ENCODE measurements at regions of chr1 and their contacts with region 1.

Region 1: DNA sequence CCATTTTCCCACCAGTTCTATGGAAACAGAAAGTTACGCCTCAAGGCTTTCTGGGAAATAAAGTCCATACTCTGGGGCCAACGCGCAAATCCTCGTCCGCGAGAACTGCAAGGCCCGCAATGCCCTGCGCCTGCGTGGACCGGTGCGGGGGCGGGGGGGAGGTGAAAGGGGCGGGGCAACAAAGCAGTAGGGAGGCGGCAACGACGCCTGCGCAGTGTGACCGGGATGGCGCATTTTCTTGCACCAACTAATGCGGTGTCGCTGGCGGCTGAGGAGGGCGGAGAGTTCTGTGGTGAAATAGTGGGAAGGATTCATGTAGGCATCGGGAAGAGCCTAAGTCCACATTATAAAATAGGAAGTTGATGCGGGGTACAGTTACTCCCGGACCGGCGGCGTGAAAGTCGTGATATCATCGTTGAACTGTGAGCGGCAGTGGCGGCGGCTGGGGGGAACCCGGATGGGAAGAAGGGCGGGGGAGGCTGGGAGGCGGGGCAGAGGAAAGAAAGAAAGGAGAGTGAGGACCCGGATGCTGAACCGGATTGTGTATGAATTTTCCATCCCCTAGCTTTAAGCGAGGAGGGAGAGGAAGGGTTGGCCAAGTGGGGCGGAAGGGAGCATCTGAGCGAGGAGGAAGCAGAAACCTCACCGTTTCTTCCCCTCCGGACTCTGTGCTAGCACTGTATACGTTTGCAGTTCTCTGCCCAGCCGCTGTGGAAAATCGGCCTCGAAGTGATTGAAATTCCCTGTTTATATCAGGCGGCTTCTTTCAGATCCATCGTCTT is at the start of gene GGPS1:
- DNase-seq: peak; percentile 98
- ATAC-seq: peak; percentile 86
- H3K4me3 ChIP-seq: peak within 1 kb of the TSS; percentile 97
- H3K27ac ChIP-seq: peak within 1 kb of the TSS; percentile 93
- H3K4me1 ChIP-seq: peaks cover 26% of the 10 kb centered on the region; the same call in 1 of the 2 replicates
- H3K27me3 ChIP-seq: no peaks in the 10 kb centered on the region
- CTCF ChIP-seq: no peak
- total RNA-seq, gene GGPS1: 9.3 and 17.4 TPM in 2 replicates

Region 2: GRCh38 chr1:235199441-235199840 is 129.1 kb before region 1 on chr1:
- CTCF ChIA-PET with region 1: no interaction called
- POLR2A ChIA-PET with region 1: no interaction called
- intact Hi-C with region 1: no loop called
- DNase-seq: no peak
- ATAC-seq: no peak
- H3K4me3 ChIP-seq: no peak overlapping the region
- H3K27ac ChIP-seq: no peak overlapping the region
- H3K4me1 ChIP-seq: no peaks in the 10 kb centered on the region
- H3K27me3 ChIP-seq: no peaks in the 10 kb centered on the region
- CTCF ChIP-seq: no peak

Region 3: DNA sequence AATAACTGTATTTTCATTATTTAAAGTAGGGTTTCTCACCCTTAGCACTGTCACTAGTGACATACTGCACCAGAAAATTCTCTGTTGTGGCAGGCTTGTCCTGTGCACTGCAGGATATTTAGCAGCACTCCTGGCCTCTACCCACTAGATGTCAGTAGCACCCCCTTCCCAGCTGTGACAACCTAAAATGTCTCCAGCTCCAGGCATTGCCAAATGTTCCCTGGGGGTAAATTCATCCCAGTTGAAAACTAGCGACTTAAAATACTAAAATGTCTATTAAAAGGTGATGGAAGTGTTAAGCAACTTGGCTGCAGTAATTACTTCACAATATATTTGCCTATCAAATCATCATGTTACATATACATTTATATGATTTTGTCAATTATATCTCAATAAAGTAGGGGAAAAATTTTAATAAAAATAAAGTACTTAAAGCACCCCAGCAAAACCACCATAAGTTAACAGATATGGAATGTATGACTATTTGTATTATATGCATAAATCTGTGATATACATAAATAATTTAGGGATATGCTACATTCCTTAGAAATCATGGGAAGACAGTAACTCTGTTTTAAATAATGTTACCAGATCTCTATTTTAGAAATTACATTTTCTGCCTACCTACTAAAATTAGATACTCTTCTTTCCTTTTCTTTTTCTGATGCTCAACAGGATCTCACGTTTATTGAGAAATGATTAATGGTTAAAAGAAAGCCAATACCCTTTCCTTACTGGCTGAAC is 75.2 kb before region 1 on chr1:
- CTCF ChIA-PET with region 1: interaction called, 3 read pairs
- POLR2A ChIA-PET with region 1: no interaction called
- intact Hi-C with region 1: loop called (anchors 1 kb)
- DNase-seq: peak; percentile 77
- ATAC-seq: peak; percentile 88
- H3K4me3 ChIP-seq: no peak overlapping the region
- H3K27ac ChIP-seq: no peak overlapping the region
- H3K4me1 ChIP-seq: no peaks in the 10 kb centered on the region
- H3K27me3 ChIP-seq: no peaks in the 10 kb centered on the region
- CTCF ChIP-seq: peak; percentile 78

Region 4: GRCh38 chr1:235367000-235367908 is 38.7 kb after region 1 on chr1 and contains the start of gene TBCE:
- CTCF ChIA-PET with region 1: interaction called, 3 read pairs
- POLR2A ChIA-PET with region 1: no interaction called
- intact Hi-C with region 1: loop called (anchors 2 kb)
- DNase-seq: peak; percentile 97
- ATAC-seq: peak; percentile 98
- H3K4me3 ChIP-seq: peak within 1 kb of the TSS; percentile 67
- H3K27ac ChIP-seq: peak within 1 kb of the TSS; percentile 78
- H3K4me1 ChIP-seq: peaks cover 7% of the 10 kb centered on the region; the same call in 1 of the 2 replicates
- H3K27me3 ChIP-seq: no peaks in the 10 kb centered on the region
- CTCF ChIP-seq: no peak
- total RNA-seq, gene TBCE: 31.8 and 41.0 TPM in 2 replicates

Measured in PC-3 (cell line).